ENCODE measurements at regions of chr16 and their contacts with region 1.

Region 1: DNA sequence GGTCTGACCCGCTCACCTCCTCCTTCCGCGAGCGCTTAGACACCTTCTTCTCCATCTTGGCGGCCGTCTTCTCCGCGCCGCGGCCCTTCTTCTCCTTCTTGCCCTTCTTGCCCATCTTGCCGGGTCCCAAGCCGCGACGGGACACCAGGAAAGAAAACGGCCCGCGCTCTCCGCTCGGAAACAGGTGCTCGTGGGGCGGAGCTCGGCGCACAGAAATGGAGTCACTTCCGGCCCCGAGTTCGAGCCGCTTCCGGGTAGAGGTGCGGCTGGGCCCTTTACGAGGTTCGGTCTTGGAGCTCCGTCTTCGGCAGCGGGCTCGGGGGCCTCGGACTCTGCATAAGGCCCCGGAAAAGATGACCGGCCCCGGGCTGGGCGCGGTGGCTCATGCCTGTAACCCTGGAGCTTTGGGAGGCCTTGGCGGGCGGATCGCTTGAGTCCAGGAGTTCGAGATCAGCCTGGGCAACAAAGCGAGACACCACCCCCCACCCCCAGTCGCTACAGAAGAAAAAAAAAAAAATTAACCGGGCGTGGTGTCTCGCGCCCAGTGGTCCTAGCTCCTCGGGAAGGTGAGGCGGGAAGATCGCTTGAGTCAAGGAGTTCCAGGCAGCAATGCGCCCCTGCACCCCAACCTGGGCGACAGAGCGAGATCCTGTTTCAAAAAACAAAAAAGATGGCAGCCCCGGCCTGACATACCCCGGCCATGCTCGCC is at the start of gene KLHDC4:
- DNase-seq: peak; percentile 76 to 91 (median 87)
- ATAC-seq: peak; percentile 76
- H3K4me3 ChIP-seq: peak within 1 kb of the TSS; percentile 71
- H3K4me3 Mint-ChIP-seq: peak within 1 kb of the TSS; percentile 96 to 100 (median 99)
- H3K27ac ChIP-seq: peak within 1 kb of the TSS; percentile 93
- H3K27ac Mint-ChIP-seq: peak within 1 kb of the TSS; percentile 95 to 100 (median 99)
- H3K4me1 ChIP-seq: peaks cover 25 to 45% of the 10 kb centered on the region in 2 donors
- H3K4me1 Mint-ChIP-seq: peaks cover 24 to 51% (median 41%) of the 10 kb centered on the region in 7 donors
- H3K27me3 ChIP-seq: no peaks in the 10 kb centered on the region
- H3K27me3 Mint-ChIP-seq: no peaks in the 10 kb centered on the region
- total RNA-seq, gene KLHDC4: 82.9 to 110 (median 85.3) TPM

Region 2: DNA sequence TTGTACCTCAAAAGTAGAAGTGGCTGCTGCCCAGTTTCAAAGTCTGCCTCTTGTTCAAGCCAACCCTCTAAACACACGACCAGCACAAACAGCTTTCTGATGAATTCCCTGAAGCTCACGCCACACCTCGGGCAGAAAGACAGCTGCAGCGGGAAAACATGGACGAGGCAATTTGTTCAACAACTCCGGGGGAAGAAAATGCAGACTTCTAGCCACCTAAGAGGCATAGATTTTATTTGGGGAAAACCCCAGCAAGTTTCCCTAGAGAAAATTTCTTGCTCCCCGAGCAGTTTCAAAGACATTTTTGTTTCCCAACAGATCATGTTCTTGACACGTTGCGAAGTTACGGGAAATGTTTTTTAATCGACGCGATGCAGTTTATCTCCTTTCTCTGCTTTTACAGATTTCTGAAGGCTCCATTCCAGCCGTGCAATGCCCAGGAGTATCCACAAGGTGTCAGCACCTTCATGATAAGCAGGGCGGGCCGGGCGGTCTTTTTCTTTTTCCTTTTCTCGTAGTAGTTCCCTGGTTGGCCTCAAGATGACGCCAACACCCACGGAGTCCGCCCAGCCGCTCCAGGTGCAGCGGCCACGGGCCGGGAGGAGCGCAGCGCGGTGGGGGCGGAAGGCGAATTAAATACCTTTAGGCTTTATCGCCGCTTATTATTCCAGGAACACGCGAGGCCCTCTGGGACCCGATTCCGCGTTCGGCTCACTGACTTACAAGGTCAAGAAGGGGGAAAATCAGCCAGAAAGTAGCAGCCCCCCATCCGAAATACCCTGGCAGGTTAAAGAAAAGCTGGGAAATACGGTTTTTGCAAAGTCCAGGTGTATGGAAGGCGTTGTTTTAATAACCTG is 1202.2 kb before region 1 on chr16:
- CTCF ChIA-PET with region 1: interaction called, 3 read pairs
- POLR2A ChIA-PET with region 1: interaction called, 3 read pairs
- intact Hi-C with region 1: loop called (anchors 1 to 10 kb)
- DNase-seq: peak; percentile 57 to 85 (median 81)
- ATAC-seq: peak; percentile 100
- H3K4me3 ChIP-seq: no peak overlapping the region
- H3K4me3 Mint-ChIP-seq: peak overlapping the region; percentile 45 to 86 (median 72)
- H3K27ac ChIP-seq: no peak overlapping the region
- H3K27ac Mint-ChIP-seq: peak overlapping the region in 2 of 9 donors; percentile 18 to 45
- H3K4me1 ChIP-seq: peaks cover 8 to 12% of the 10 kb centered on the region in 2 donors
- H3K4me1 Mint-ChIP-seq: peaks cover 10 to 37% (median 17%) of the 10 kb centered on the region in 7 donors
- H3K27me3 ChIP-seq: peaks cover 14 to 20% of the 10 kb centered on the region in 2 donors
- H3K27me3 Mint-ChIP-seq: peaks cover 40 to 48% (median 46%) of the 10 kb centered on the region in 5 donors

Region 3: DNA sequence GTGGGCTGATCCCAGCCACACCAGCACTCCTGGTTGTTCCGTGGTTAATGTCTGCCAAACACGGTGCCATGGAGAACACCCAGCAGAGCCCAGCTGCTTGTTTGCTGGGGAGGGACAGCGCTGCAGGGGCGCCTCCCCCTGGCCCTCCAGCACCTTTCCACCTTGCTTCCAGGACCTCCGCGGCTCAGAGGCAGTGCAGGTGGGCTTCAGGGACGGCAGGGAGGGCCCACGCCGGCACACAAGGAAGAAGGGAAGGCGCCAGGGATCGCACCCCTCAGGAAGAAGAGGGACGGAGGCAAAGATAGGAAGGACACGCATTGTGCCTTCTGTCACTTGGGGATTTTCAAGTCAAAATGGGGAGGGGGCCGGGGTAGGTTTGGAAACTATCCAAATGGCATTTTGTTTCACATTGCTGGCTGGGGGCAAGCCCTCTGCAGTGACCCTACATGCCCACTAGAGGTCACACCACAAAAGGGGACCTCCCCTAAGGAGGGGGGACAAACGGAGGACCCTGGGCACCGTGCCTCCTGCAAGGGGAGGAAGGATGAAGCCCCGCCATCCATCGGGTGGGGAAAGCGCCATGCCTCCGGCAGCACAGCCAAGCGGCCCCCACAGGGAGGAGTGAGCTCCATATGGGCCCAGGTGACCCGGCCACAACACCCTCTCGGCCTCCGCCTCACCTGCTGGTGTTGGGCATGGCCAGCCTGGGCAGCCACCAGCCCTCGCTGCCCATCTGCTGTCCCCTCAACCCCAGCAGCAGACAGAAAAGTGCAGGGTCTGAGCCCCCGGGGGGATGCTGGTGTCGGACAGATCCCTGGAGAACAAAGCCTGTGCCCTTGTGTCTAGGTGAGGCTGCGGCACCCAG is 441.3 kb before region 1 on chr16:
- CTCF ChIA-PET with region 1: no interaction called
- POLR2A ChIA-PET with region 1: no interaction called
- intact Hi-C with region 1: loop called (anchors 2 to 5 kb)
- DNase-seq: peak in 7 of 9 donors; percentile 30 to 49 (median 41)
- ATAC-seq: peak; percentile 88
- H3K4me3 ChIP-seq: no peak overlapping the region
- H3K4me3 Mint-ChIP-seq: no peak overlapping the region
- H3K27ac ChIP-seq: peak overlapping the region; percentile 20
- H3K27ac Mint-ChIP-seq: peak overlapping the region in 3 of 9 donors; percentile 32 to 59 (median 39)
- H3K4me1 ChIP-seq: peaks cover 0 to 4% of the 10 kb centered on the region in 2 donors
- H3K4me1 Mint-ChIP-seq: peaks cover 0 to 5% (median 4%) of the 10 kb centered on the region in 7 donors
- H3K27me3 ChIP-seq: no peaks in the 10 kb centered on the region
- H3K27me3 Mint-ChIP-seq: no peaks in the 10 kb centered on the region

Region 4: DNA sequence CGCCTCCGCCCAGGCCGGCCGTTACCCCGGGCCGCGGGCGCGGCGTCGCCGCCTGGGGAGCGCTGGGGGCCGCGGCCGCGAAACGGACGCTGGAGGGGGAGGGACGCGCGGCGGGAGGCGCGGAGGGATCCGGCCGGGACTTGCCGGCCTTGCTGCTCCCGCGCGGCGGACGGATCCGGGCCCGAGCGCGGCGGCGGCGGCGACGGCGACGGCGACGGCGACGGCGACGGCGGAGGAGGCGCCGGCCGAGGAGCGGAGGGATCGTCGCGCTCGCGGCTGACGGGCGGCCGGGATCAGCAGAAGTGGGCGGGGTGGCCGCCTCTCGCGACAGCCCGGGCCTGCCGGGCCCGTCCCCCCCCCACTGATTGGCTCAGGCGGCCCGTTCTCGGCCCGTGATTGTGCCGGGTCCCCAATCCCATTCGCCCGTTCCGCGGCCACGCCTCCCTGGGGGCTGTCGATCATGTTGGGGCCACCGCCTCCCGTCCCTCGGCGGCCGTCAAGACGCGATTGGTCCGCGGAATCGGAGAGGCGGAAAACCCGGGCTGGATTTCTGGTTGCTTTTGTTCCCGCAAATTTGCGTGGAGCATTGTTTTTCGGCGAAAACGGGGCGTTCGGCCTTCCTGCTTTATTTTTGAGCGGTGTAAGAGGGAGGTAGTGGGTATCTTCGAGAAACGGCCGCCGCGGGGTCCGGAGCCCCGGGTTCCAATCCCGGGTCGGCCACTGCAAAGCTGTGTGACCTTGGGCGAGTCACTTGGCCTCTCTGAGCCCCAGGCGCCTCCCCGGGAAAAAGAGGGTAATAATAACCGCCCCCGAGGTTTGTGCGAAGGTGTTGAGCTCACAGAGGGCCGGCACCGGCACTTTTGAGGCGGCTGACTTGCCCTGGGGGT is 273.0 kb before region 1 on chr16 and contains the start of gene ZCCHC14:
- CTCF ChIA-PET with region 1: no interaction called
- POLR2A ChIA-PET with region 1: no interaction called
- intact Hi-C with region 1: loop called in 1 of 2 experiments (anchors 2 kb)
- DNase-seq: peak; percentile 95 to 99 (median 98)
- ATAC-seq: peak; percentile 97
- H3K4me3 ChIP-seq: peak within 1 kb of the TSS; percentile 75
- H3K4me3 Mint-ChIP-seq: peak within 1 kb of the TSS; percentile 85 to 95 (median 90)
- H3K27ac ChIP-seq: peak within 1 kb of the TSS; percentile 66
- H3K27ac Mint-ChIP-seq: peak within 1 kb of the TSS; percentile 81 to 93 (median 85)
- H3K4me1 ChIP-seq: peaks cover 21 to 36% of the 10 kb centered on the region in 2 donors
- H3K4me1 Mint-ChIP-seq: peaks cover 24 to 59% (median 40%) of the 10 kb centered on the region in 7 donors
- H3K27me3 ChIP-seq: no peaks in the 10 kb centered on the region
- H3K27me3 Mint-ChIP-seq: peaks cover 0 to 53% (median 0%) of the 10 kb centered on the region in 5 donors
- total RNA-seq, gene ZCCHC14: 8.3 to 34.2 (median 23.5) TPM

Region 5: DNA sequence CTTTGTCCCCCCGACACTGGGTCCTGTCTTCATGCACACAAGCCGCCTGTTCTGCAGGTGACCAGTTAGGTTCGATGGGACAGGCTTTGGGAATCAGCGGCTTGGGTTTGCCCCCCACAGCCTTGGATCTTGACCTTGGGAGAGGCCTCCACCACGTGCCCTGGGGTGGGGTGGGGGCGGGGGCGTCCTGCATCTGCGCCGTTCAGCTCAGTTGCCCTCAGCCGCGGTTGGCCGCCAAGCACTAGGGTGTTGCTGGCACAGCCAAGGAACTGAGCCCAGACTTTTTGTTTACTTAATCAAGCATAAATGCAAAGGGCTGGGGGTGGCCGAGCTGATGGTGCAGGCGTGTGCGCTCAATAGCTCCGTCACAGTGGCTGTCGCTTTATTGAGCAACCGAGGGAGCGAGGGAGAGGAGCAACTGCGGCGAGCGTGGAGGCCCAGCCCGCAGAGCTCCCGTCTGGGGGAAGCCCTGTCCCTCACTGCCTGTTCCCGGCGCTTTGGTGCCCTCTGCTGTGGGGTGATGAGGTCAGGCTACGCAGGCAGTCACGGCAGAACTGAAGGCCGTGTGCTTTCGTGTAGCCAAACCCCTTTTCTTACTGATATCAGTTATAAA is 129.8 kb before region 1 on chr16:
- CTCF ChIA-PET with region 1: interaction called, 35 read pairs
- POLR2A ChIA-PET with region 1: interaction called, 5 read pairs
- intact Hi-C with region 1: loop called in 1 of 2 experiments (anchors 1 kb)
- DNase-seq: peak; percentile 65 to 81 (median 75)
- ATAC-seq: peak; percentile 94
- H3K4me3 ChIP-seq: peak overlapping the region; percentile 56
- H3K4me3 Mint-ChIP-seq: peak overlapping the region; percentile 55 to 91 (median 88)
- H3K27ac ChIP-seq: peak overlapping the region; percentile 53
- H3K27ac Mint-ChIP-seq: peak overlapping the region in 8 of 9 donors; percentile 41 to 94 (median 76)
- H3K4me1 ChIP-seq: peaks cover 6 to 8% of the 10 kb centered on the region in 2 donors
- H3K4me1 Mint-ChIP-seq: peaks cover 3 to 16% (median 11%) of the 10 kb centered on the region in 7 donors
- H3K27me3 ChIP-seq: no peaks in the 10 kb centered on the region
- H3K27me3 Mint-ChIP-seq: peaks cover 0 to 13% (median 6%) of the 10 kb centered on the region in 5 donors

Region 6: DNA sequence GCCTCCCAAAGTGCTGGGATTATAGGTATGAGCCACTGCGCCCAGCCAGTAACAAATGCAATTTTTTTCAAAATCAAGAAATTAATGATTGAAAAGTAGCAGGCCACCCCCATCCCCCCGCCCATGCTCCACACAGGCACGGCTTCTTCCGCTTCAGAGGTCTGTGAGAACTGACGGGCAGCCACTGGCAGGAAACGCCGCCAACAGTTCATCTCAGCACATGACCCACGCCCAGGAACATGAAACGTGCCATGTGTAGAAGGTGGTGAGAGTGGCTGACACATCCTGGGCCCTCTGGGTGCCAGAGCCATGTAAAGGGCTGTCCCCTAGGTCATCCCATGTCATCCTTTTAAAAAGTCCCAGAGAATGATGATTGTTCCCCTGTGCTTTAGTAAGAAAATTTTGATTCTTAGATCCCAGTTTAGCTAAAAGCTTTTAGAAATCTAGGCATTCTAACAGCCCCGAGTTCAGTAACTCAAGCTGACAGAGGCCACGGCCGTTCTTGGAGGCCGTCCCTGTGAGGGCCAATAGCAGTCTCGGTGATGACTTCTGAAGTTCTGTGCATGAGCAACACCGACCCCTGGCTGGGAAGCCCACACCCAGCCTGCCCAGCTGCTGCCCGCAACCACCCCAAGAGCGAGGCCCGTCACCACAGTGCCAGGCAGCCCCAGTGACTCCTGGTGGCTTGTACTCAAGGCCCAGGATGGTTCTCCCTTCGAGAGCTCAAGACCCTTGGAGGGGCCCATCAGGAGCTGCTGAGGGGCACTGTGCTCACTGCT is 52.3 kb before region 1 on chr16:
- CTCF ChIA-PET with region 1: no interaction called
- POLR2A ChIA-PET with region 1: interaction called, 3 read pairs
- intact Hi-C with region 1: loop called in 1 of 2 experiments (anchors 2 kb)
- DNase-seq: peak in 7 of 9 donors; percentile 54 to 68 (median 57)
- ATAC-seq: peak; percentile 93
- H3K4me3 ChIP-seq: peak overlapping the region; percentile 11
- H3K4me3 Mint-ChIP-seq: peak overlapping the region in 9 of 10 donors; percentile 50 to 79 (median 65)
- H3K27ac ChIP-seq: peak overlapping the region; percentile 61
- H3K27ac Mint-ChIP-seq: peak overlapping the region; percentile 70 to 97 (median 92)
- H3K4me1 ChIP-seq: peaks cover 11 to 26% of the 10 kb centered on the region in 2 donors
- H3K4me1 Mint-ChIP-seq: peaks cover 13 to 45% (median 27%) of the 10 kb centered on the region in 7 donors
- H3K27me3 ChIP-seq: no peaks in the 10 kb centered on the region
- H3K27me3 Mint-ChIP-seq: no peaks in the 10 kb centered on the region

Region 7: GRCh38 chr16:87950765-87951549 is 185.0 kb after region 1 on chr16 and contains the start of gene BANP:
- CTCF ChIA-PET with region 1: no interaction called
- POLR2A ChIA-PET with region 1: interaction called, 3 read pairs
- intact Hi-C with region 1: loop called in 1 of 2 experiments (anchors 1 kb)
- DNase-seq: peak; percentile 96 to 99 (median 99)
- ATAC-seq: peak; percentile 93
- H3K4me3 ChIP-seq: peak within 1 kb of the TSS; percentile 83
- H3K4me3 Mint-ChIP-seq: peak within 1 kb of the TSS; percentile 92 to 100 (median 99)
- H3K27ac ChIP-seq: peak within 1 kb of the TSS; percentile 90
- H3K27ac Mint-ChIP-seq: peak within 1 kb of the TSS; percentile 97 to 100 (median 99)
- H3K4me1 ChIP-seq: peaks cover 15 to 33% of the 10 kb centered on the region in 2 donors
- H3K4me1 Mint-ChIP-seq: peaks cover 27 to 66% (median 43%) of the 10 kb centered on the region in 7 donors
- H3K27me3 ChIP-seq: no peaks in the 10 kb centered on the region
- H3K27me3 Mint-ChIP-seq: peaks cover 0 to 8% (median 2%) of the 10 kb centered on the region in 5 donors
- total RNA-seq, gene BANP: 43.6 to 81.2 (median 68.5) TPM

Measured in naive thymus-derived CD4-positive, alpha-beta T cell (primary cell).